ENCODE measurements at regions of chr5 and their contacts with region 1.

Region 1: DNA sequence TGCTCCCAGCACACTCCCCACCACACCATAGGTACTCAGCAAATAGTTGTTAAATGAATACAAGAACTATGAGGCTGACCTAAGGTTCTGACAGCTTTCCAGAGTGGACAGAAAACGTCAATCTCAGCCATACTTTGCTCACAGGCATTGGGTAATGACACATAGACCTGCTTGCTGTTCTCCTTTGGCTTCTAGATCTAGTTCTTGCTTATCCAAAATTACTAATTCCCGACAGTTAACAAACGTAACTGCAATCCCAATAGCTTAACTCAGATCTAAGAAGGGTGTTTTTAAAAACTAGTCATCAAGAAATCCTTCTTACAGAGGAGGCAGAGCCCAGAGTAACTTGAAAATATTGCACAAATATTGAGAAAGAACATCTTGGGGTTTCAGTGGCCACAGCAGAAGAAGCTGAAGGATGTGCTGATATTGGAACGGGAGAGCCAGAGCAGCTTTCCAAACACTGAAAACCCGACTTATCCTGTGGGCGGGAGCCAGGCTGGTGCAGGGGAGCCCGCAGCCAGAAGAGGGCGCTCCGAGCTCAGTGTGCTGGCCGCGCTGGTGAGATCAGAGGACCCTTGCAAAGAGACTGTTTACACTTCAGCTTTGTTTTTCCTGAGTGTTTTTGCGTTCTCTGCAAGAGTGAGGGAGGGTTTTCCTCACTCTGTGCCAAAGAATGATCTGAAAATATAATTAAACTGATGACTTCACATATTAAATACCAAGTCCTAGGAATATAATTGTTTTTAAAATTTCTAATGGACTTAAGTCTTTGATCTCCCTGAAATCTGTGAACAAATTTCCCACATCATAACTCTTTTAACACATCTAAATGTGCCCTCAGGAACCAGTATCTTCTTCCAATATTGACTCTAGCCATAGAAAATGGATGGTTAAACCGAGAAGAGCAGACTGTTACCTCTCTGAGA is 30.3 kb downstream of the FGF1 start:
- DNase-seq: peak; percentile 94
- H3K4me3 ChIP-seq: no peak overlapping the region
- H3K27ac ChIP-seq: peak overlapping the region; percentile 3 to 53 (median 39)
- H3K4me1 ChIP-seq: peaks cover 0 to 13% (median 8%) of the 10 kb centered on the region in 4 donors
- H3K27me3 ChIP-seq: no peaks in the 10 kb centered on the region
- CTCF ChIP-seq: peak; percentile 74 to 99 (median 90)
- EP300 ChIP-seq: no peak
- POLR2A ChIP-seq: no peak

Region 2: GRCh38 chr5:142156839-142157463 is 498.7 kb before region 1 on chr5:
- intact Hi-C with region 1: no loop called
- DNase-seq: no peak
- H3K4me3 ChIP-seq: no peak overlapping the region
- H3K27ac ChIP-seq: no peak overlapping the region
- H3K4me1 ChIP-seq: peaks cover 0 to 4% (median 0%) of the 10 kb centered on the region in 4 donors
- H3K27me3 ChIP-seq: no peaks in the 10 kb centered on the region
- CTCF ChIP-seq: no peak
- EP300 ChIP-seq: no peak
- POLR2A ChIP-seq: no peak

Region 3: GRCh38 chr5:142611154-142611553 is 44.4 kb before region 1 on chr5:
- intact Hi-C with region 1: loop called (anchors 2 kb)
- DNase-seq: peak; percentile 80
- H3K4me3 ChIP-seq: no peak overlapping the region
- H3K27ac ChIP-seq: no peak overlapping the region
- H3K4me1 ChIP-seq: peaks cover 0 to 12% (median 5%) of the 10 kb centered on the region in 4 donors
- H3K27me3 ChIP-seq: no peaks in the 10 kb centered on the region
- CTCF ChIP-seq: peak; percentile 84 to 93 (median 89)
- EP300 ChIP-seq: no peak
- POLR2A ChIP-seq: no peak

Region 4: DNA sequence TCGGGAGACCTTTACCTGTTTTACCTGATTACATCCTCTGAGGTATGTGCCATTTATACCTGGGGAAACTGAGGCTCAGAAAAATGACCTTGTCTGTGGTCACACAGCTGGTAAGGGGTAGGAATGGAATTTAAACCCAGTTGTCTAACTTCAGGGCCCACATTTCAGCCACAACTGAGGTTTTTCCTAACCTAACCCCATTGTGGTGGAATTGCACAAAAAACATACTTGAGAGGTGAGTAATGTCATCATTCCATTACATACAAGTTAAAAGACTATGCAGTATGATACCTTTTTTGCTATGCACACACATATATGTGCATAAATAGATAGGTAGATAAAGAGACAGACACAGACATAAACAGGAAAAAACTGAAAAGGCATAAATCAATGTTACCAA is 16.2 kb after region 1 on chr5:
- intact Hi-C with region 1: no loop called
- DNase-seq: no peak
- H3K4me3 ChIP-seq: no peak overlapping the region
- H3K27ac ChIP-seq: peak overlapping the region in 3 of 4 donors; percentile 41 to 67 (median 47)
- H3K4me1 ChIP-seq: peaks cover 0 to 33% (median 19%) of the 10 kb centered on the region in 4 donors
- H3K27me3 ChIP-seq: no peaks in the 10 kb centered on the region
- CTCF ChIP-seq: no peak
- EP300 ChIP-seq: no peak
- POLR2A ChIP-seq: no peak

Region 5: DNA sequence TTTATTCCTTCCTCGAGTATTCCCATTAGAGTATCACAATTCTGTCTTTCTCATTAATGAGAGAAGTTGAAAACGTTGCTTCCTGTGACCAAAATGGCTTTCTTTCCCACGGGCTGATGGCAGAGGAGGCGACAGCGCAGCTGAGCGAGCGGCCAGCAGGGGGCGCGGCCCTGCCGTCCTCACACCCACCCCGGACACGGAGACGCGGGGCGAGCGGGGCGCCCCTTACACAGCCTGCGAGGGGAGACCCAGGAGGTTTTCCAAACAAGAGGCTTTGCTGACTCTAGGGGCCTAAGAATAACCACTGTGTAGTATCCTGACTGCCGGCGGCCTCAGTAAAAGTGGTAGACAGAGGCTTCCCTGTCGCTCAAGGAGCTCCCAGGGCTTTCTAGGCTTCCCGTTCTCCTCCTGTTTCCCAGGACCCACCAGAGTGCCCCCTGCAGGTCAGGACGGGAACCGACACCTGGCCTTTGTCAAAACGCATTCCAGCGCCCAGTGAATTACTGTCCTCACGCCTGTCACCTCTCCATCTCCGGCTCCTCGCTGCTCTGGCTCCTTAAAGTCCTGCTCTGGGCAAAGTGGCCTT is 57.6 kb after region 1 on chr5:
- intact Hi-C with region 1: no loop called
- DNase-seq: peak; percentile 92
- H3K4me3 ChIP-seq: peak overlapping the region; percentile 29 to 56 (median 51)
- H3K27ac ChIP-seq: peak overlapping the region; percentile 67 to 83 (median 78)
- H3K4me1 ChIP-seq: peaks cover 0 to 12% (median 7%) of the 10 kb centered on the region in 4 donors
- H3K27me3 ChIP-seq: no peaks in the 10 kb centered on the region
- CTCF ChIP-seq: peak; percentile 82 to 99 (median 94)
- EP300 ChIP-seq: no peak
- POLR2A ChIP-seq: no peak

Measured in sigmoid colon (tissue), 7 donors.